Ovary (tissue), 10 donors: ENCODE measurements at regions of chr7 and their contacts with region 1.

Region 1: GRCh38 chr7:126436213-126436868 is 816.4 kb downstream of the GRM8 start:
- DNase-seq: no peak
- H3K4me3 ChIP-seq: no peak overlapping the region
- H3K27ac ChIP-seq: no peak overlapping the region
- H3K4me1 ChIP-seq: no peaks in the 10 kb centered on the region
- H3K27me3 ChIP-seq: no peaks in the 10 kb centered on the region
- CTCF ChIP-seq: no peak
- EP300 ChIP-seq: no peak
- POLR2A ChIP-seq: no peak

Region 2: GRCh38 chr7:126378642-126379041 is 57.7 kb before region 1 on chr7:
- intact Hi-C with region 1: no loop called
- DNase-seq: no peak
- H3K4me3 ChIP-seq: no peak overlapping the region
- H3K27ac ChIP-seq: no peak overlapping the region
- H3K4me1 ChIP-seq: no peaks in the 10 kb centered on the region
- H3K27me3 ChIP-seq: no peaks in the 10 kb centered on the region
- CTCF ChIP-seq: no peak
- EP300 ChIP-seq: no peak
- POLR2A ChIP-seq: no peak

Region 3: DNA sequence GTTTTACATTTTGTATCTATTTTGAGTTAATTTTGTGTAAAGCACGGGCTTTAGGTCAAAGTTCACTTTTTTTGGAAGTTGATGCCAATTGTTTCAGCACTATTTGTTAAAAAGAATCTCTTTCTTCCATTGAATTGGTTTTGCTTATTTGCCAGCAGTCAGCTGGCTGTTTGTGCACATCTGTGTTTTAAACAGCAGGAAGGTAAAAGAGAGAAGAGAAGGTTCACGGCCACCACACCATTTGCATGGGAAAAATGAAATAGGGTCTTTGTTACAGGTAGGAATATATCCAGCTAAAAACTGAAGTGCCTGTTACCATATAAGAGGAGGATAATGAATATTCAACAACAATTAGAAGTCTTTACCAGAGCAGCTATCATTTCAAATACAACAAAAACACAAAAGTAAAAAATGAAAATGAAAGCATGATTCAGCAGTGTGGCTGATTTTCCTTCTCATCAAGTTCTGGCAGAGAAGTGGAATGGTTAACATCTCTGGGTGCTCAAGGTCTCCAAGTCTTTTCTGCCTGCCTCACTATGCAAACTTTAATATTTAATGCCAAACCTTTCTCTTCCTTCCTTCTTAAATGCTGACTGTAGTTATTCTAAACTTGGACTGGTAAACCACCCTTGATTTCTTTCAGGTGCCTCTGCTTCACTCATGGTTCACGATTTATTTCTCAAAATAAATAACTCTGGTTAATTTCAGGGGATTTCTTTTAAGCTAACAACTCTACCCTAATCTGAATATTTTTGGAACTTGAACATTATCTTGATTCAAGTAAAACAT is 25.1 kb before region 1 on chr7:
- intact Hi-C with region 1: no loop called
- DNase-seq: no peak
- H3K4me3 ChIP-seq: no peak overlapping the region
- H3K27ac ChIP-seq: no peak overlapping the region
- H3K4me1 ChIP-seq: no peaks in the 10 kb centered on the region
- H3K27me3 ChIP-seq: no peaks in the 10 kb centered on the region
- CTCF ChIP-seq: no peak
- EP300 ChIP-seq: no peak
- POLR2A ChIP-seq: no peak

Region 4: GRCh38 chr7:126578338-126578737 is 142.0 kb after region 1 on chr7:
- intact Hi-C with region 1: loop called in 1 of 4 experiments (anchors 5 kb)
- DNase-seq: no peak
- H3K4me3 ChIP-seq: no peak overlapping the region
- H3K27ac ChIP-seq: no peak overlapping the region
- H3K4me1 ChIP-seq: no peaks in the 10 kb centered on the region
- H3K27me3 ChIP-seq: no peaks in the 10 kb centered on the region
- CTCF ChIP-seq: no peak
- EP300 ChIP-seq: no peak
- POLR2A ChIP-seq: no peak